ENCODE measurements at regions of chr9 and their contacts with region 1.

Region 1: GRCh38 chr9:137188490-137189296 is at the starts of genes ANAPC2 and SSNA1:
- DNase-seq: peak; percentile 91
- H3K4me3 Mint-ChIP-seq: peak within 1 kb of the TSS; percentile 94
- H3K27ac Mint-ChIP-seq: peak within 1 kb of the TSS; percentile 95
- H3K4me1 Mint-ChIP-seq: peaks cover 10% of the 10 kb centered on the region
- H3K27me3 Mint-ChIP-seq: no peaks in the 10 kb centered on the region
- CTCF ChIP-seq: peak; percentile 25
- total RNA-seq, gene ANAPC2: 42.1 and 43.6 TPM in 2 replicates
- total RNA-seq, gene SSNA1: 81.4 and 82.6 TPM in 2 replicates

Region 2: DNA sequence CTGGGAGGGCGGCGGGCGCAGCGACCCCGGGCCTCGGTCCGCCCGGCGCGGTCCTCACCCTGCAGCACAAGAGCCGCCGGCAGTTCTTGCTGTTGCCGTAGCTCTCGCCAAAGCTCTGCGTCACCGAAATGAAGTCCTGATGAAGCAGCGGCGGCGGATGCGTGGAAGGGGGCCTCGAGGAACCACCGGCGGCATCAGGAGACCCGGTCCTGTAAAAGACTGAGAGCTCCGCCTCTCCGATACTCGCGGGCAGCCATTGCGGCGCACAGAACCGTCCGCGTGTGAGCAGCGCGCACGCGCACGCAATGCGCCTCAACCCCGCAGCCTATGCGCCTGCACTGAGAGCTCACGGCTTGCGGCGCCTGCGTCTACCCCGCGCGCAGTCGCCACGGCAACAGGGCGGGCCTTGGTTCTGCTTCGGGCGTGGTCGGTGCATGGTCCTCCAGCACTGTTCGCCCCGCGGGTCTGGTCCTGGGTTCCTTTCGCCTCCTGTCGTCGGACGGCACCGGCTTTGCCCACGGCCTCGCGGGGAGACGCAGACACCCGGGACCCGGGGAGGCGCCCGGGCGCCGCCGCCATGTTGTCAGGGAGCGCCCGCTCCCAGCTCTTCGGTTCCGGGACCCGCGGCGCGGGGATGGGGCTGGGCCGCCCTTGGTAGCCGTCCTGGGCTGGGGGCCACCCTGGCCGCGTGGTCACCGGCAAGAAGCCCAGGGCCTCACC is 59.1 kb before region 1 on chr9:
- CTCF ChIA-PET with region 1: interaction called, 6 read pairs
- POLR2A ChIA-PET with region 1: interaction called, 41 read pairs
- intact Hi-C with region 1: no loop called
- DNase-seq: peak; percentile 91
- H3K4me3 Mint-ChIP-seq: peak overlapping the region; percentile 77
- H3K27ac Mint-ChIP-seq: no peak overlapping the region
- H3K4me1 Mint-ChIP-seq: peaks cover 18% of the 10 kb centered on the region
- H3K27me3 Mint-ChIP-seq: no peaks in the 10 kb centered on the region
- CTCF ChIP-seq: no peak

Region 3: DNA sequence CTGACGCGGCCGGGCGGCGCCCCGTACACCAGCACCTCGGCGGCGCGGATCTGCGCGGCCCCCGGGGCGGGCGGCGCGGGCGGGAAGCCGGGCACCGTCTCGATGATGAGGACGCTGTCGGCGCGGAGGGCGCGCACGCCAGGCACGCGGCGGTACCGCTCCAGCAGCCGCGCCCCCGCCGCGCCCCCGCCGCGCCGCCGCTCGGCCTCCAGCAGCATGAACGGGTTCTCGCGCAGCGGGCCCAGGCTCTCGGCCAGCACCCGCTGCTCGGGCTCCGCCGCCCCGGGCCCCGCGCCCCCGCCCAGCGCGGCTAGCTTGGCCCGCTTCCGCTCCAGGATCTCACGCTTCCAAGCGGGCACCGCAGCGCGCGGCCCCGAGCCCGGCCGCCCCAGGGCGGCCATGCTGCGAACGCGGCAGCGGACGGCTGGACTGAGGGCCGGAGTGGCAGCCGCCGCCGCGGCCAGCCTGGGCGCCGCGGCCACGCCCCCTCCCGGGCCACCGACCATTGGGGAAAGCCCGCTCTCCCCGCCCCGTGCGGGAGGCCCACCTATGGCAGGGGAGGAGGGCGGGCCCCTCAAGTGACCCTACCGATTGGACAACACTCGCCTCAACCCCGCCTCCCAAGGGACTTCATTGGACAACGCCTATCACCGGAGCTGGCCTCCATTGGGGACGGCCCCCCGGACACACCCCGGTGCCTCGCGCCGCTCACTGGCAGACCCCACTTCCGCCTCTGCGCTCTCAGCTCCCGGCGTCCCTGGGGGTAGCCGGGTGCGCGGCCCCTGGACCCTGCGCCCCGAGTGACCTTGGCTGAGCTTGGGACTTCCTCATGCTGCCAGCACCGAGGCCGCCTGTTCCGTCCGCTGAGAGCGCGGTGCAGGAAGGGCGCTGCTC is 11.9 kb after region 1 on chr9 and contains the start of gene TPRN:
- CTCF ChIA-PET with region 1: interaction called, 5 read pairs
- POLR2A ChIA-PET with region 1: interaction called, 43 read pairs
- intact Hi-C with region 1: no loop called
- DNase-seq: peak; percentile 100
- H3K4me3 Mint-ChIP-seq: peak within 1 kb of the TSS; percentile 76
- H3K27ac Mint-ChIP-seq: no peak within 1 kb of the TSS
- H3K4me1 Mint-ChIP-seq: peaks cover 12% of the 10 kb centered on the region
- H3K27me3 Mint-ChIP-seq: no peaks in the 10 kb centered on the region
- CTCF ChIP-seq: no peak
- total RNA-seq, gene TPRN: 12.6 and 13.4 TPM in 2 replicates

Region 4: DNA sequence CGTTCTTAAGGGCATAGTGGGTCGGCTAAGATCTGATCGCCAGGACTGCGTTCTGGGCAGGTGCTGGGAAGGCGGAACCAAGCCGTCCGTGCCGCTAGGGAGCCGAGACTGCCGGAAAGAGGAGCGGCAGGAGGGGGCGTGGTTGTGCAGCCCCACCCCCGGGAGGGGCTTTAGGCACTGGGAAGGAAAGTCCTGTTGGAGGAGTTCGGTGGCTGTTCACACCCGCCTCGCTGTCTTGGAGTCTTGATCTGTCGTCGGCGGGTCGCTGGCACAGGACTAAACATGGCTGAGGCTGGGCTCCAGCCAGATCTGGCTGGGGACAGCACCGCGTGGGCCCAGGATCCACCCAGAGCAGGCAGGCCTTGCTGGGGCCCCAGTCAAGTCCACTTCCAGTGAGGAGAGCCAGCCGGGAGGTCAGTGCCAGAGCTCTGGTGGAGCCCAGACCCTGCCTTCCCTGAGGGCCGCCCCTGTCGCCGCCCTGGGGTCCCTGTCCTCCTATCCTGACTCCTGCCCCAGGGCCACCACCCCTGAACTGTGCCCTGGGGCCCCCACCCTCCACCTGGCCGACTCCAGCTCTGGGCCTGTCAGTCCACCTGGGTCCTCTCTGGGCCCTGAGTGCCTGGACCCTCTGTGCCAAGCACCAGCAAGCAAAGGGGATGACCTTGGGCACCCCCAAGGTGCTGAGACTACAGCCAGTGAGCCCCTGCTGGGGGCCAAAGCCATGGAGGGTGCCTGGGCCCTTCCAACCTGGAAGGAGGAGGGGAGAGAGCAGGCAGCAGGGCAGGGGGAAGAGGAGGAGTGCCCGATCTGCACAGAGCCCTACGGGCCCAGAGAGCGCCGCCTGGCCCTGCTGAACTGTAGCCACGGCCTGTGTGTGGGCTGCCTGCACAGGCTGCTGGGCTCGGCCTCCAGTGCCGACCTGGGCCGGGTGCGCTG is 28.9 kb after region 1 on chr9:
- CTCF ChIA-PET with region 1: no interaction called
- POLR2A ChIA-PET with region 1: interaction called, 10 read pairs
- intact Hi-C with region 1: no loop called
- DNase-seq: peak; percentile 74
- H3K4me3 Mint-ChIP-seq: peak overlapping the region; percentile 70
- H3K27ac Mint-ChIP-seq: peak overlapping the region; percentile 60
- H3K4me1 Mint-ChIP-seq: peaks cover 5% of the 10 kb centered on the region
- H3K27me3 Mint-ChIP-seq: no peaks in the 10 kb centered on the region
- CTCF ChIP-seq: no peak

Region 5: DNA sequence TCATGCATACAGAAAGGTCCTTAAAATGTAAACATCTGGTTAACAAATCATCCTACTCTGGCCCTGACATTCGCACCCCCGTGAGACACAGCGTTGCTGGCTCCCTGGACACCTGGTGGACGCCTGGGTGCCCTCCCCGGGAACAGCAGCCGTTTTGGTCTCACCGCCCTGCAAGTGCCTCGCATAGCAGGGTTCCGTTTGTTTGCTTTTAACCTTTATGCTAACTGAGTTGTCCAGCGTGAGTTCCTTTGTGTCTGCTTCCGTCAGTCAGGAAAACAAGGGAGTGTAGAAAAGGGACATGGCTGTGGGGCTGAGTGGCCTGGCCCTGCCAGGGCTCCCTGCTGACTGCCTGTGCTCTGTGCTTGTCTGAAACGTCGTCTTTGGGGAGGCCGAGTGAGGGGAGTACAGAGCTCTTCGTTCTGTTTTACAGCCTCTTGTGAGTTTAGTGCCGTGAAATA is 597.0 kb after region 1 on chr9:
- CTCF ChIA-PET with region 1: no interaction called
- POLR2A ChIA-PET with region 1: no interaction called
- intact Hi-C with region 1: no loop called
- DNase-seq: no peak
- H3K4me3 Mint-ChIP-seq: no peak overlapping the region
- H3K27ac Mint-ChIP-seq: no peak overlapping the region
- H3K4me1 Mint-ChIP-seq: no peaks in the 10 kb centered on the region
- H3K27me3 Mint-ChIP-seq: no peaks in the 10 kb centered on the region
- CTCF ChIP-seq: no peak